OCI-LY7 (cell line): ENCODE measurements at regions of chr6 and their contacts with region 1.

Region 1: DNA sequence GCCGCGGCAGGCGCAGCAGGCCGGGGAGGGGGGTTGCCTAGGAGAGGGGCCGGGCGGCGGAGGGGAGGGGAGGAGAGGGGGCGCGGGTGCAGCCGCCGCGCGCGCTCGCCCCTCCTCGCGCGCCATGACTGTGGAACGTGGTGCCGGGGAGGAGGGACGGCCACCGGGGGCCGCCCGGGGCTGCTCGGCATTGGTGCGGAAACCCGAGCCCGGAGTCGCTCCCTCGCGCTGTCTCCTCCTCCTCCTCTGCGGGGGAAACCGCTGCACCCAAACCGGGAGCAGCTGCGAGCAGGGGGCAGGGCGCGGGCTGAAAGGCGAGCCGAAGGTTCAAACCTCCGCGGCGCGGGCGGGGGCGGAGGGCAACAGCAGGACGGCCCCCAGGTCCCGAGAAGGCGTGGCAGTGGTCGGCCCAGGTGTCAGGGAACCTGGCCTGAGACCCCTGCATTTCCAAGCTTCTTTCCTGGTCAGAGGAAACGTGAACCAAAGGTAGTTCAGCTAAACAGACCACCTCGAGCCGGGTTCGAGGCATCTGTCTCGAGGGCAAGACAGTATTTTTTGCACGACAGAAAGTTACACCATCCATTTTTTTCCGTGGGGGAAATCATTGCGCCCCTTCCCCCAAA is 1.4 kb upstream of the TRERF1 start:
- DNase-seq: peak; percentile 88
- H3K4me3 ChIP-seq: peak overlapping the region; percentile 80
- H3K27ac ChIP-seq: peak overlapping the region; percentile 77
- H3K4me1 ChIP-seq: peaks cover 26% of the 10 kb centered on the region
- CTCF ChIP-seq: no peak

Region 2: GRCh38 chr6:41787219-41787917 is 665.8 kb before region 1 on chr6 and contains the start of gene TOMM6:
- CTCF ChIA-PET with region 1: no interaction called
- POLR2A ChIA-PET with region 1: no interaction called
- intact Hi-C with region 1: loop called (anchors 10 kb)
- DNase-seq: peak; percentile 97
- H3K4me3 ChIP-seq: peak within 1 kb of the TSS; percentile 86
- H3K27ac ChIP-seq: peak within 1 kb of the TSS; percentile 81
- H3K4me1 ChIP-seq: peaks cover 39% of the 10 kb centered on the region
- CTCF ChIP-seq: peak; percentile 81
- total RNA-seq, gene TOMM6: 84.9 and 131 TPM in 2 replicates

Region 3: DNA sequence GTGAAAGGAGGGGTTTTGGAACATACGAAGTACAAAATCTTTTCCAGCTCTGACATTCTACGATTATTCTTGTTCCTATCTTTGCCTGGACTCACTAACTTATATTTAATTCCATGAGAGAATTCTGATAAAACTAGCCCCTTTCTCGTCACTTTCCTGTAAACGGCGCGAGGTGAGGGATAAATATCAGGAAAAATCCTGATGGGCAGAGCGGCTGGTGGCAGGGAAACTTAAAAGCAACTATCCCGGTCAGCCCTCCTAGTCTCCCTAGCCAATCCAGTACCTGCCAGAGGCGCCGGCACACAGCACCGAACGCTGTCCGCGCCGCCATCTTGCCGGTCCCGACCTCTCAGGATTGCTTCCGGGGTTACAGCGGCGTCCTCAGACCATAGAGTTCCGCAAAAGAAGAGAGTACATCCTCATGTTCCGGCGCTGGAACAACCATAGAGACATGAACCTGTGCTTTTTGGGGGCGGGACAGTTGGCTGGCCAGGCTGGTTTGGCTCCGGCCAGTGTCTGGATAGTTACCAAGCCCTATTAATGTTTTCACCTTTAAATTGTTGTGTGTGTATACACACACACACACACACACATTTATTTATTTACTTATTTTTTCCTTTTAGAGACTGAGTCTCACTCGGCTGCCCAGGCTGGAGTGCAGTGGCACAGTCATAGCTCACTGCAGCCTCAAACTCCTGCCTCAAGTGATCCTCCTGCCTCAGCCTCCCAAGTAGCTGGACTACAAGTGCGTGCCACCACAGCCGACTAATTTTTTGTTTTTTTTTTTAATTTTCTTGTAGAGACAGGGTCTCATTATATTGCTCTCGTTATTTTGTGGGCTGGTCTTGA is 235.4 kb before region 1 on chr6 and contains the start of gene MRPS10:
- CTCF ChIA-PET with region 1: interaction called, 3 read pairs
- POLR2A ChIA-PET with region 1: no interaction called
- intact Hi-C with region 1: loop called (anchors 5 kb)
- DNase-seq: peak; percentile 96
- H3K4me3 ChIP-seq: peak within 1 kb of the TSS; percentile 89
- H3K27ac ChIP-seq: peak within 1 kb of the TSS; percentile 48
- H3K4me1 ChIP-seq: peaks cover 26% of the 10 kb centered on the region
- CTCF ChIP-seq: no peak; the same call in 1 of the 2 replicates
- total RNA-seq, gene MRPS10: 25.1 and 25.8 TPM in 2 replicates

Region 4: GRCh38 chr6:42269553-42269952 is 183.6 kb before region 1 on chr6:
- CTCF ChIA-PET with region 1: no interaction called
- POLR2A ChIA-PET with region 1: interaction called, 3 read pairs
- intact Hi-C with region 1: loop called (anchors 5 kb)
- DNase-seq: peak; percentile 93
- H3K4me3 ChIP-seq: no peak overlapping the region
- H3K27ac ChIP-seq: peak overlapping the region; percentile 39
- H3K4me1 ChIP-seq: peaks cover 15% of the 10 kb centered on the region
- CTCF ChIP-seq: 0 out of 2 replicates have a peak, but pooled peaks have one; percentile 7

Region 5: GRCh38 chr6:42367353-42368011 is 85.7 kb before region 1 on chr6:
- CTCF ChIA-PET with region 1: no interaction called
- POLR2A ChIA-PET with region 1: no interaction called
- intact Hi-C with region 1: loop called (anchors 2 kb)
- DNase-seq: peak; percentile 79
- H3K4me3 ChIP-seq: peak overlapping the region; percentile 28
- H3K27ac ChIP-seq: peak overlapping the region; percentile 53
- H3K4me1 ChIP-seq: peaks cover 43% of the 10 kb centered on the region
- CTCF ChIP-seq: no peak

Region 6: DNA sequence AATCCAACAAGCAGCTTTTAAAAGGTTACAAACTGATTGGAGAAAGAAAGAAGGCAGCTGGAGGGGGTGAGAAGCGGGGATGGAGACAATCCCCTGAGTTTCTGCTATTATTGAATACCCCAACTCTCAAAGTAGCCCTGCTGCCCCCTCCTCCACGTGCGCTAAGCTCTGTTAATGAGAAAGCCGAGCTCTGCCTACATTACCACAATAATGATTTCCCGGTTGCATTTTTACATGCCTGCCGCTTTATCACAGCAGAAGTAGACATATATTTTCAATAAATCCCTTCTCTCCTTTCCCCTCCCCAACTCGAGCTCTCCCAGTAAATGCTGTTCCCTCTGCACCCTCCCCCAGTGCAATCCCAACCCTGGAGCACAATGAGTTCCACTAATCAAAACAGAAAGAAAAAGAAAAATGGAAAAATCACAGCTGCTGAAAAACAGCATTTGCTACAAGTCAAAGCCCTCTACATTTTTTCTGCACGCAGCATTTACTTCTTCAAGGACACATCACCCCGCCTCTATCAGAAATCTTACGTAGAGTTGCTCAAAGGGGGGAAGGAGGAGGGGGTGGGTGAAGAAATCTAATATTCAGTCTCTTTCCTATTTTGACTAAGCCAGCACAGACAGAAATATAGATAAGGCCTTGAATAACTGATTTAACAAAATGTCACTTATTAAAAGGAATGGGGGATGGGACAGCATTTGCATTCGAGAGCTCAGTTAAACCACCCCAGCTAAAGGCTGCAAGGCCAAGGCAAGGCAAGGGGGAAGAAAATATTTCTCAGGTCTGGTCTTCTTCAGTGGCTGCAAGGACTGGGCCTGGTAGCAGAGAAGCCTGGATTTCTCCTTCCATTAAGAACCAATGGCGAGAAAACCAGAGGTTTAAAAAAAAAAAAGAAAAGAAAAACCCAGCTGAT is 12.1 kb before region 1 on chr6:
- CTCF ChIA-PET with region 1: no interaction called
- POLR2A ChIA-PET with region 1: interaction called, 12 read pairs
- intact Hi-C with region 1: no loop called
- DNase-seq: no peak
- H3K4me3 ChIP-seq: no peak overlapping the region
- H3K27ac ChIP-seq: no peak overlapping the region
- H3K4me1 ChIP-seq: peaks cover 6% of the 10 kb centered on the region
- CTCF ChIP-seq: no peak